HepG2 (cell line): ENCODE measurements at regions of chr7 and their contacts with region 1.

Region 1: DNA sequence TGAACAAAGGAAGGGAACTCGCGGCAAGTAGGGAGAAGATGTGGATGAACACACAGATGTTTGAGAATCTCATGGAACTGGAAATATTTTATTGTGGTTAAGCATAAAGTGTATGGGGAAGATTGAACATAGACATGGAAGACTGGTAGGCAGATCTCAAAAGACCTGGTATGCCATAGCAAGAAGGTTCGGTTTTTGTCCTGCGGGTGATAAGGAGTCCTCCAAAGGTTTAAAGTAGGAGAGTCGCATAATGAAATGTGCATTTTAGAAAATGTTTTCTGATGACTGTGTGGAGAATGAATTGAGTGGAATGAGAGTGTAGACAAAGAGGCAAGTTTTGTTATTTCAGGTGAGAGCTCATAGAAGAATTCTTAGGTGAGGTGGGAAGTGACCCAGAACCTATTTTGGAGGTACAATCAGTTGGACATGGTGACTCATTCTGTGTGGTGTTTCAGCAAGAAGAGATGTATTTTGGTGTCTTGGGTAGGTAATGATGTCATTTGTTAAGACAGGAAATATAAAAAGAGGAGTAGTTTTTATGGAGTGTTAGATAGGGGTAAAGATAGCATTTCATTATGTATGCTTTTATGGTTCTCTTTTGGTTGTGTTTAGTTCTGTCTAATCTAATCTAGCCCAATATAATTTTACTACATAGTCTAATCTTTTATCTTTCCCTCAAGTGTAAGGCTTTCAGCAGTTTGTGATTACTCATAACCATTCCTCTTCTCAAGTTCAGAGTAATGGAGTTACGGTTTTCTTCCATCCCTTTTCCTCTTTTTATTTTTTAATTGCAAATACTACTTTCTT is 239.2 kb downstream of the EXOC4 start:
- DNase-seq: no peak
- ATAC-seq: no peak
- H3K4me3 ChIP-seq: no peak overlapping the region
- H3K27ac ChIP-seq: no peak overlapping the region
- H3K4me1 ChIP-seq: no peaks in the 10 kb centered on the region
- H3K27me3 ChIP-seq: no peaks in the 10 kb centered on the region
- CTCF ChIP-seq: no peak
- EP300 ChIP-seq: no peak
- POLR2A ChIP-seq: no peak
- RAD21 ChIP-seq: no peak

Region 2: DNA sequence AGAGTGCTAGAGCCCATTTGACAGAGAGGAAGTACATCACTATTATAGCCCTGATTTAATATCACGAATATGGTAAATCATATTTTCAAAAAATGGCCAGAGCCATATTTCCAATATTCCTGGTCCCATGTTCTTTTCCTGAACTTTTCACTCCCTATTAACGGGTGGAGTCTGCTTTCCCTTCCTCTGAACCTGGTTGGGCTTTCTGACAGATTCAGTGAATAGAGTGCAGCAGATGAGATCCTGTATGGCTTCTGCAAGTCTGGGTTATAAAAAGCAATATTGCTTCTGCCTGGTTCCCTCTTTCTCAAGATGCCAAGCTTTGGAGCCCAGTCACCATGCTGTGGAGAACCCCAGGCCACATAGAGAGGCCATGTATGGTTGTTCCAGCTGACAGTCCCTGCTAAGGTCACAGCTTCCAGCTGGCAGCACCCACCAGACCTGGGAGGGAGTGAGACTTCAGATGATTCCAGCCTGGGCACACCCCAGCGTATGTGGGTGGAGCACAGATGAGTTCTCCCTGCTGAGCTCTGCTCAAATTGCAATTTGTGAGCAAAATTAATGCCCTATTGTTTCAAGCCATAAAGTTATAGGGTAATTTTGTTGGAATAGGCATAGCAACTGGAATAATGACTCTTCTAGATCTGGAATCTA is 392.3 kb before region 1 on chr7:
- CTCF ChIA-PET with region 1: no interaction called
- POLR2A ChIA-PET with region 1: no interaction called
- in situ Hi-C with region 1: no loop called
- intact Hi-C with region 1: no loop called
- DNase-seq: no peak
- ATAC-seq: no peak
- H3K4me3 ChIP-seq: no peak overlapping the region
- H3K27ac ChIP-seq: no peak overlapping the region
- H3K4me1 ChIP-seq: no peaks in the 10 kb centered on the region
- H3K27me3 ChIP-seq: peaks cover 0 to 25% of the 10 kb centered on the region in 2 experiments; a peak in 1 of 5 replicates
- CTCF ChIP-seq: no peak
- EP300 ChIP-seq: no peak
- POLR2A ChIP-seq: no peak
- RAD21 ChIP-seq: no peak

Region 3: GRCh38 chr7:133478591-133479135 is 13.4 kb before region 1 on chr7:
- CTCF ChIA-PET with region 1: no interaction called
- POLR2A ChIA-PET with region 1: no interaction called
- in situ Hi-C with region 1: no loop called
- intact Hi-C with region 1: loop called (anchors 1 kb)
- DNase-seq: no peak
- ATAC-seq: no peak
- H3K4me3 ChIP-seq: no peak overlapping the region
- H3K27ac ChIP-seq: no peak overlapping the region
- H3K4me1 ChIP-seq: peaks cover 7% of the 10 kb centered on the region; the same call in 1 of the 2 replicates
- H3K27me3 ChIP-seq: no peaks in the 10 kb centered on the region
- CTCF ChIP-seq: no peak
- EP300 ChIP-seq: no peak
- POLR2A ChIP-seq: no peak
- RAD21 ChIP-seq: no peak

Region 4: DNA sequence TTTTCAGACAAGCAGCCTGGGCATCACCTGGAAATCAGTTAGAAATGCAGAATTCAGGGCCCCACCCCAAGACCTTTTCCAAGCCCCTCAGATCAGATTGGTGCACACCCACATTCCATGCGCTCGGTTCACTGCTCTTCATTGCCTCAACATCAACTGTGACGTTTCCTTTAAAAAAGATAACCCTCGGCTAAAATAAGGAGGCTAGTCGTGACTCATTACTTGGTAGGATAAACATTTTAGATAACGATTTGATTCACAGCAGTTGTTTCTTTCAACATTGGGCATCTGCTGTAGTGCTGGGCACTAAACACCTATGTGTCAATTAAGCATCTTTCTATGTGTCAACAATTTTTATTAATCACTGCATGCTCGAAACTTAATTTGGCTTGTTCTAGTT is 444.0 kb after region 1 on chr7:
- CTCF ChIA-PET with region 1: no interaction called
- POLR2A ChIA-PET with region 1: no interaction called
- in situ Hi-C with region 1: no loop called
- intact Hi-C with region 1: no loop called
- DNase-seq: no peak
- ATAC-seq: no peak
- H3K4me3 ChIP-seq: no peak overlapping the region
- H3K27ac ChIP-seq: no peak overlapping the region
- H3K4me1 ChIP-seq: no peaks in the 10 kb centered on the region
- H3K27me3 ChIP-seq: no peaks in the 10 kb centered on the region
- CTCF ChIP-seq: no peak
- EP300 ChIP-seq: no peak
- POLR2A ChIP-seq: no peak
- RAD21 ChIP-seq: no peak